Aorta (tissue), 5 donors: ENCODE measurements at regions of chr4 and their contacts with region 1.

Region 1: DNA sequence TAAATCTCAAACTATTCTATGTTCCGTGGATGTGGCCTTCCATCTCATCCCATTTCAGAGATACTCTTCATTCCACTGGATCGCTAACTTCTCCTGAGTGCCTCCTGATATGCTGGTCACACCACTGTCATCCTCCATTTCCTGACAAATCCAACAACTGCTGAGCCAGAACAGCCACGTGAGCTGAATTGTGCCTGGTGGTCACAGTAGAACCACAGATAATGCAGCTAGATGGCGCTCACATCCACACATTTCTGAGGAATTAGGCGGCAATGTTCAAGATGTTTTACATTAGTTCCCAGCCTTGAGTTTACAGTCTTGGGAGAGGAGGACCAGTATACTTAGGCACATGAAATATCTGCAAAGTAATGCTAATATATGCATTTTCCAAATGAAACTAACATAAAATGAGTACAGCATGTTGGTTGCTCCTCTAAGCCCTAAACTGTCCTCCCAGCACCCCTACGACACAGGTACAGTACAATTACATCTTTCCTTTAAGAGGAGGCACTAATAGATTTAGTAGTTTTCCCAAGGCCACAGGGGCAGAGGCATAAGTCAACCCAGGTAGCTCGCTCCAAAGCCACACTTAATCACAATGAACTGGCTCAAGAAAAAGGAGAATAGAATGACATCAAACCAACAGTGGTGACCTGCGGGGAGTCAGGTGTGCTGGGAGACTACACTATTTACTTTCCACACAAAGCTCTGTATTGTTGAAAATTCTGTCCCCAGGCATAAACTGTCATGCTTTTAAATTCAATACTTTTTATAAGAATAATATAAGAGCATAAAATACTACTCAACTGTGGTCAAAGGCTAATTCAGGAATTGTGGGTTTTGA is 134.2 kb downstream of the CHIC2 start:
- DNase-seq: peak; percentile 82 to 83
- ATAC-seq: peak; percentile 92
- H3K4me3 ChIP-seq: no peak overlapping the region
- H3K27ac ChIP-seq: no peak overlapping the region
- H3K4me1 ChIP-seq: peaks cover 0 to 3% of the 10 kb centered on the region in 2 donors
- H3K27me3 ChIP-seq: no peaks in the 10 kb centered on the region

Region 2: GRCh38 chr4:53015681-53016080 is 914.5 kb before region 1 on chr4:
- intact Hi-C with region 1: loop called in 1 of 2 experiments (anchors 10 kb)
- DNase-seq: no peak
- ATAC-seq: no peak
- H3K4me3 ChIP-seq: no peak overlapping the region
- H3K27ac ChIP-seq: no peak overlapping the region
- H3K4me1 ChIP-seq: peaks cover 6 to 31% of the 10 kb centered on the region in 2 donors
- H3K27me3 ChIP-seq: no peaks in the 10 kb centered on the region

Region 3: DNA sequence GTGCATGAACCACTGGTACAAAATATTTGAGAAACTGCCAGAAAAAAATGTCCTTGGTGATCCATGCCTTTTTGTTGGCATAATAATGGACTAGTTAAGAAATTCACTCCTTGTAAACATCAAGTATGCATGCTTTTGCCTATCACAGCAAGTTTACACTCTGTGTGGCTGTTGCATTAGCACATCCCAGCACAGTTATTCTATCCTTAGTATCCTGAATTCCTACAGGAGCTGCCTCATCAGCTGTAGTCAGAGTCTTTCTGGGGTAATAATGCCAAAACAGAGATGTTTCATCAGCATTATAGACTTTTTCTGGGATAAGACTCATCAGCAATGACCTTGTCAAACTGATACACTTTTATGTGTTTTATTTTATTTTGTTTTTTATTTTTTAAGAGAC is 51.4 kb after region 1 on chr4:
- intact Hi-C with region 1: no loop called
- DNase-seq: no peak
- ATAC-seq: no peak
- H3K4me3 ChIP-seq: no peak overlapping the region
- H3K27ac ChIP-seq: no peak overlapping the region
- H3K4me1 ChIP-seq: no peaks in the 10 kb centered on the region
- H3K27me3 ChIP-seq: no peaks in the 10 kb centered on the region

Region 4: GRCh38 chr4:54064295-54065111 is 134.3 kb after region 1 on chr4 and contains the start of gene CHIC2:
- intact Hi-C with region 1: loop called in 1 of 2 experiments (anchors 5 kb)
- DNase-seq: peak; percentile 98 to 99
- ATAC-seq: peak; percentile 96
- H3K4me3 ChIP-seq: peak within 1 kb of the TSS; percentile 58 to 85
- H3K27ac ChIP-seq: peak within 1 kb of the TSS; percentile 72 to 98
- H3K4me1 ChIP-seq: no peaks in the 10 kb centered on the region
- H3K27me3 ChIP-seq: no peaks in the 10 kb centered on the region
- total RNA-seq, gene CHIC2: 31.8 to 31.9 TPM

Region 5: GRCh38 chr4:54099748-54100574 is 169.8 kb after region 1 on chr4 and contains the start of gene GSX2:
- intact Hi-C with region 1: loop called in 1 of 2 experiments (anchors 10 kb)
- DNase-seq: peak in 1 of 2 donors; percentile 85
- ATAC-seq: peak; percentile 30
- H3K4me3 ChIP-seq: peak within 1 kb of the TSS; percentile 27
- H3K27ac ChIP-seq: no peak within 1 kb of the TSS
- H3K4me1 ChIP-seq: no peaks in the 10 kb centered on the region
- H3K27me3 ChIP-seq: no peaks in the 10 kb centered on the region
- total RNA-seq, gene GSX2: not detected

Region 6: DNA sequence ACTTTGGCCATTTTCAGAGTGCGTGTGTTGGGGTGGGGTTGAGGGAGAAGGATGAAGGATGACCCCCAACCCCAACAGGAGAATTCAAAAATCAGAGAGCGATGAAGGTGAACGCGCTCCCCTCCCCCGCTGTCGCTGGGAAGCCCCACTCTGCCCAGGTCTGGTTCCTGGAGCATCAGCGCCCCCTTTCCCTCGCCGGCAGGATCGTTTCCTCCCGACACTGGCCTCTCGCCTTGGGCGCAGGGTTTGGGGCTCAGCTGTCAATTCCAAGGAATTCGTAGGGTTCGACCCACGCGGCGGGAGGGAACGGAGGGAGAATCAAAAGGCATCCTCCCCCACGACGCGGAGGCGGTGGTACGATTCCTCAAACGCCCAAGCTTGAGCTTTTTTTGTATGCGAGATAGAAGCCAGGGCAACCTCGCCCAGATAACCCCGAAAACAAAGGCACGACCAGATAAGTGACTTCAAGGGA is 297.9 kb after region 1 on chr4:
- intact Hi-C with region 1: loop called (anchors 2 to 5 kb)
- DNase-seq: peak; percentile 84 to 93
- ATAC-seq: peak; percentile 75
- H3K4me3 ChIP-seq: peak overlapping the region; percentile 59 to 78
- H3K27ac ChIP-seq: peak overlapping the region in 1 of 2 donors; percentile 65
- H3K4me1 ChIP-seq: no peaks in the 10 kb centered on the region
- H3K27me3 ChIP-seq: no peaks in the 10 kb centered on the region